Panc1 (cell line): ENCODE measurements at regions of chr18 and their contacts with region 1.

Region 1: GRCh38 chr18:830315-830901 is 18.4 kb upstream of the YES1 start:
- DNase-seq: no peak
- ATAC-seq: no peak
- H3K4me3 ChIP-seq: no peak overlapping the region
- H3K27ac ChIP-seq: no peak overlapping the region
- H3K4me1 ChIP-seq: peaks cover 2% of the 10 kb centered on the region; the same call in 1 of the 2 replicates
- H3K27me3 ChIP-seq: no peaks in the 10 kb centered on the region
- CTCF ChIP-seq: no peak

Region 2: GRCh38 chr18:623761-624620 is 206.4 kb before region 1 on chr18:
- CTCF ChIA-PET with region 1: interaction called, 4 read pairs
- POLR2A ChIA-PET with region 1: no interaction called
- in situ Hi-C with region 1: no loop called
- intact Hi-C with region 1: loop called (anchors 5 kb)
- DNase-seq: no peak
- ATAC-seq: peak; percentile 95
- H3K4me3 ChIP-seq: no peak overlapping the region
- H3K27ac ChIP-seq: no peak overlapping the region
- H3K4me1 ChIP-seq: no peaks in the 10 kb centered on the region
- H3K27me3 ChIP-seq: no peaks in the 10 kb centered on the region
- CTCF ChIP-seq: peak; percentile 78

Region 3: GRCh38 chr18:644395-645004 is 185.9 kb before region 1 on chr18:
- CTCF ChIA-PET with region 1: no interaction called
- POLR2A ChIA-PET with region 1: no interaction called
- in situ Hi-C with region 1: no loop called
- intact Hi-C with region 1: no loop called
- DNase-seq: no peak
- ATAC-seq: no peak
- H3K4me3 ChIP-seq: no peak overlapping the region
- H3K27ac ChIP-seq: no peak overlapping the region; the same call in 1 of the 2 replicates
- H3K4me1 ChIP-seq: peaks cover 8% of the 10 kb centered on the region
- H3K27me3 ChIP-seq: no peaks in the 10 kb centered on the region
- CTCF ChIP-seq: no peak

Region 4: DNA sequence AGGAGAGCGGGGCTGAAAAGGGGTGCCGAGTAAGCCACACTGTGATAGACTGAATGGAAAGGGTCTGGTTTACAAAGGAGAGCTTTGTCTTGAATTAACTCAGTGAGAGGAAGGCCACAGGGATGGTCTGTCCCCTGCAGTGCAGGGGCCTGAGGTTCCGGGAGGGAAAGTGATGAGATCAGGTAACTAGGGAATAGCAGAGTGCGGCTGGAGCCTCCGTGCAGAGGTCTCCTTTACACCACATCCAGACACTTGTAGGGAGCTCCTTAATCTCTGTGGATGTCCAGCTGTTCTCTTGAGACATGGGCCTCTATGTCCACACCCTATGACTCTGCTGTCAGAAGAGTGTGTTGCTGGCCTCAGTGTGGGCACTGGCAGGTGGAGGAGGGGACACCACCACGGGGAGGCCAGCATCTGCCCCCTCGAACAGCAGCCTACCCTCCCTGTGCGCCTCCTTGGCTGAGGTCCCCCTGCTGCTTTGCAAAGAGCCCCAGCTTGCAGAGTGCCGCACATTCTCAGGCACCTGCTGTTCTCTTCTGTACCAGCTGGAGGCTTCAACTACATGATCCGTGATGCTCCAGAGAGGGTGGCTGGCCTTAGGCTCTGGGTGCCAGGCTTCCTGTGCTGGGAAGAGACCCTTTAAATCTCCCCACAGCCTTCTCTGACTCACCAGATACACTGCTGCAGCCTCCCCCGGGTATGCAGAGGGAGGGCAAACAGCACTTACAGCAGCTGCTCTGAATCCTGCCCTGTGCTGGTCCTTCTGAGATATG is 143.9 kb before region 1 on chr18:
- CTCF ChIA-PET with region 1: no interaction called
- POLR2A ChIA-PET with region 1: no interaction called
- in situ Hi-C with region 1: no loop called
- intact Hi-C with region 1: no loop called
- DNase-seq: no peak
- ATAC-seq: peak; percentile 65; the same call in 1 of the 2 replicates
- H3K4me3 ChIP-seq: no peak overlapping the region
- H3K27ac ChIP-seq: no peak overlapping the region
- H3K4me1 ChIP-seq: no peaks in the 10 kb centered on the region
- H3K27me3 ChIP-seq: no peaks in the 10 kb centered on the region
- CTCF ChIP-seq: no peak

Region 5: DNA sequence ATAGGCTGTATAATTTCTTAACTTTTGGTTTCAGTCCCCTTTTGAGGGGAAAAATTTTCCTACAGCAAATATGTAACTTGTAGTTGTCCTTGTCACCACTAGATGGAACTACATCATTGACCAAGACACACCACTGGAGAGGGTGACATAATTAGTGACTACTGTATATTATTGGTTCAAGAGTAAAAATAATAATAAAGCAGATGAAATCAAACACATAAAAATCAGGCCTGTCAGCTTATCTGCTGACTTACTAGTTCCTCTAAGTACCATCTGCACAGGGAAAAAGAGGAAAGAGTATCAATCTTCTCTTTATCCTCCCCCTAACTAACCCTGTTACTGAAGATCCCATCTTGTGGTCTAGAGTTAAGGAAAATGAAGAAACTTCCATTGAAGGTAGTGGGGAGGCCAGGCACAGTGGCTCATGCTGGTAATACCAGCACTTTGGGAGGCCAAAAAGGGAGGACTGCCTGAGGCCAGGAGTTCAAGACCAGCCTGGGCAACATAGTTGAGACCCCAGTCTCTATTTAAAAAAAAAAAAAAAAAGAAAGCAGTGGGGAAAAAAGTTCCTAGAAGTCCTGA is 88.4 kb before region 1 on chr18:
- CTCF ChIA-PET with region 1: no interaction called
- POLR2A ChIA-PET with region 1: no interaction called
- in situ Hi-C with region 1: no loop called
- intact Hi-C with region 1: loop called (anchors 1 kb)
- DNase-seq: peak; percentile 18
- ATAC-seq: peak; percentile 87
- H3K4me3 ChIP-seq: no peak overlapping the region
- H3K27ac ChIP-seq: no peak overlapping the region
- H3K4me1 ChIP-seq: no peaks in the 10 kb centered on the region
- H3K27me3 ChIP-seq: no peaks in the 10 kb centered on the region
- CTCF ChIP-seq: peak; percentile 70; the same call in 1 of the 2 replicates